Colonic mucosa (tissue), 4 donors: ENCODE measurements at regions of chr6 and their contacts with region 1.

Region 1: GRCh38 chr6:138115877-138116660 is 8.8 kb upstream of the PERP start:
- DNase-seq: peak; percentile 44
- H3K4me3 ChIP-seq: no peak overlapping the region
- H3K27ac ChIP-seq: no peak overlapping the region
- H3K4me1 ChIP-seq: no peaks in the 10 kb centered on the region
- H3K27me3 ChIP-seq: no peaks in the 10 kb centered on the region
- CTCF ChIP-seq: peak; percentile 59

Region 2: DNA sequence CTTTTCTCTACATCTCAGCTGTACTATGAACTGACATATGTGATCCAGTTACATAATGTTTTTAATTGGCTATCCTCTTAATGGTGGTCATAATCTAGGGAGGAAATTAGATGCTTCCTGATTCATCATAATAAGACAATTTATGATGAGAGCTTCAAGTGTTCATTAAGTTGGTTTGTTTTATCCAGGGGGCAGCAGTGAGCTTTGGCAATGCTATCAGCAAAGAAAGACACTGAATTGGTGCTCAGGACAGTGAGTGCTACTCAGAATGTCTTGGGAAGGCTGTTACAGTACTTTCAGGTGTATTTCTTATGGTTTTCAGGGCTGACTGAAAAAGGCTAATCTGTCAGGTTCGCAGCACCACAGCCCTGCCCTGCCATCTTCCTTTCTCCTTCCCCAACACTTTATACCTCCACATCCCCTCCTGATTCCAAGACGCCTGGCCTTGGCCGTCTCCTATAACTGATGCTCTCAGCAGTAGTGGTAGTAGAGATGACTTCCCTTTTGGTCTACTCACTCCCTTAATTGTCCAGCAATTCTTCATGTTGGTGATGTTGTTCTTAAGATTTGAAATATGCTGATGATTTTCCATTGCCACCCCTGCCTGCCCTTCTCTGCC is 316.0 kb before region 1 on chr6:
- intact Hi-C with region 1: no loop called
- DNase-seq: peak; percentile 71
- H3K4me3 ChIP-seq: no peak overlapping the region
- H3K27ac ChIP-seq: peak overlapping the region; percentile 62
- H3K4me1 ChIP-seq: no peaks in the 10 kb centered on the region
- H3K27me3 ChIP-seq: no peaks in the 10 kb centered on the region
- CTCF ChIP-seq: peak; percentile 44

Region 3: DNA sequence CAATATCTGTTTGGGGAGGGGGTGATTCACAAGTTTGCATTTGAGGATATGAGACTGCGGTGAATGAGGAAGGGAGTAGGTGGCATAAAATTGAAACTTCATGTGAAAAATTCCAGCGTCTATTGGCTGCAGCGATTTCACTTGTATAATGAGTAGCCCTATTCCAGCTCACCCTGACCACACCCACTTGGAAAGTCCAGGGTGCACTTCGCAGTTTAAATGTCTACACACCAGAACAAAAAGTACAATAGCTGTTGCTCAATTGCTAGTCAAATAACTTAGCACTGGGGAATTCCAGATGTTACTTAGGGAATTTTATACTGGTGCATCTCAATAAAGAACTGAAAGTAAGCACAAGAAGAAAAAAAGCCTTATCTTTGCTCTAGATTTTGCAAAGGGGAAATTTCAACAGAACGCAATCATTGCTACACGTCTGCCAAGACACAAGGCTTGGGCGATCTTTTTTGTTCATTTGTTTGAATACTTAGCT is 242.8 kb before region 1 on chr6:
- intact Hi-C with region 1: no loop called
- DNase-seq: peak; percentile 92
- H3K4me3 ChIP-seq: no peak overlapping the region
- H3K27ac ChIP-seq: peak overlapping the region; percentile 76
- H3K4me1 ChIP-seq: peaks cover 8% of the 10 kb centered on the region
- H3K27me3 ChIP-seq: no peaks in the 10 kb centered on the region
- CTCF ChIP-seq: no peak

Region 4: DNA sequence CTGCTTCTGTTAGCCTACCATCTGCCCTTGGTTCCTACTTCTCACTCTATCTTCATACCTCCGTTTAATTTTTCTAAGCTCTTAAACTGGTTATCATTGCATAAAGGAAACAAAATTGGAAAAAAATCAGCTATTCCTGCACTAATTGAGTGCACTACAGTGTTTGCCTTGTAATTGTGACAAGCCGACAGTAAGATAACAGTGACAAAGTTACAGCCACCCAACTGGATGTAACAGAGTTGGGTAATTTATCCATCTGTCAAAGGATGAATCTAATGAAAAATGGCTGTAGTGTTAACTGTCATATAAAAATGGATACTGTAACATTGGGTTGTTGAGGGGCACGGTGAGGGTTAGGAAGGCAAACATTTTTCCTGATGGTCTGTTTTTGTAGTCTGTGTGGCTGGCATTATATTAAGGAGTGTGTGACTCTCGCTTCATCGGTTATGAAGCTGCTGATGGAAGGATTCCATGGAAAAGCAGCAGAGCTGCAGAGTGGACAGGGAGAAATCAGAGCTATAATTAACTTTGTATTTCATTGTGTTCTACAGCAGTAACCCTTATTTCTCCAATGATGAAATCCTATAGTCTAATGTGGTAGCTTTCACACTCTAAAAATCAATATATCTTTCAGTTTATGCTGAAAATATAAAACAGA is 89.5 kb after region 1 on chr6:
- intact Hi-C with region 1: loop called (anchors 5 kb)
- DNase-seq: no peak
- H3K4me3 ChIP-seq: no peak overlapping the region
- H3K27ac ChIP-seq: no peak overlapping the region
- H3K4me1 ChIP-seq: no peaks in the 10 kb centered on the region
- H3K27me3 ChIP-seq: no peaks in the 10 kb centered on the region
- CTCF ChIP-seq: no peak

Region 5: GRCh38 chr6:138287144-138287955 is 171.3 kb after region 1 on chr6:
- intact Hi-C with region 1: loop called (anchors 2 kb)
- DNase-seq: peak; percentile 74
- H3K4me3 ChIP-seq: no peak overlapping the region
- H3K27ac ChIP-seq: no peak overlapping the region
- H3K4me1 ChIP-seq: no peaks in the 10 kb centered on the region
- H3K27me3 ChIP-seq: no peaks in the 10 kb centered on the region
- CTCF ChIP-seq: peak; percentile 68

Region 6: GRCh38 chr6:138404662-138405337 is 288.7 kb after region 1 on chr6:
- intact Hi-C with region 1: loop called (anchors 5 kb)
- DNase-seq: peak; percentile 53
- H3K4me3 ChIP-seq: peak overlapping the region; percentile 70
- H3K27ac ChIP-seq: peak overlapping the region; percentile 86
- H3K4me1 ChIP-seq: peaks cover 4% of the 10 kb centered on the region
- H3K27me3 ChIP-seq: no peaks in the 10 kb centered on the region
- CTCF ChIP-seq: no peak

Region 7: GRCh38 chr6:138517635-138518034 is 401.6 kb after region 1 on chr6:
- intact Hi-C with region 1: loop called (anchors 5 kb)
- DNase-seq: peak; percentile 73
- H3K4me3 ChIP-seq: no peak overlapping the region
- H3K27ac ChIP-seq: no peak overlapping the region
- H3K4me1 ChIP-seq: no peaks in the 10 kb centered on the region
- H3K27me3 ChIP-seq: no peaks in the 10 kb centered on the region
- CTCF ChIP-seq: peak; percentile 65

Region 8: DNA sequence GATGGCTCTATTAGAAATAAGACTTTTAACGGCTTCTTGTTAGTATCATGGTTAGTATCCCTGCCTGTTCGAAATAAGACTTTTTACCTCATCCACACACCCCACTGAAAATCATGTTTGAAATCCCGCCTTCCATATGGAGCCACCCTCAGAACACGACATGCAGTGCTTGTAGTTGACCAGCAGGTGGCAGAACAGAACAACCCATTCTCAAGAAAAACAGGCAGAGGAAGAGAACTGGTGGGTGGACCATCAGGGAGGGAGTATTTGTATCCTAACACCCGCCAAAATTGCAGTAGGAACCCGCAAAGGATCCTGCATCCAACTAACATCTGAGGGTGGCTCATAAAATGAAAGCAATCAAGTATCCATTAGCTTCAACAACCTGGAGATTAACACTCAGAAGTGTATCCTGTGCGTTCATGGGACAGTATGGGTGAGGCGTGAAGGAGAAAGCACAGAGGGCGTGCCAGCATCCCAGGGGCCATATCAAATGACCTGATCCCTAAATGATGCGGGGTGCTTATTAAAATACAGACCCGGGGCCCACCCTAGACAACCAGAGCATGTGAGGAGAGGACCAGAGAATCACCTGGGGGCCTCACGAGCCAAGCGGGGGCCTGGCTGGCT is 472.9 kb after region 1 on chr6:
- intact Hi-C with region 1: loop called (anchors 10 kb)
- DNase-seq: peak; percentile 70
- H3K4me3 ChIP-seq: no peak overlapping the region
- H3K27ac ChIP-seq: no peak overlapping the region
- H3K4me1 ChIP-seq: peaks cover 5% of the 10 kb centered on the region
- H3K27me3 ChIP-seq: no peaks in the 10 kb centered on the region
- CTCF ChIP-seq: peak; percentile 93

Region 9: DNA sequence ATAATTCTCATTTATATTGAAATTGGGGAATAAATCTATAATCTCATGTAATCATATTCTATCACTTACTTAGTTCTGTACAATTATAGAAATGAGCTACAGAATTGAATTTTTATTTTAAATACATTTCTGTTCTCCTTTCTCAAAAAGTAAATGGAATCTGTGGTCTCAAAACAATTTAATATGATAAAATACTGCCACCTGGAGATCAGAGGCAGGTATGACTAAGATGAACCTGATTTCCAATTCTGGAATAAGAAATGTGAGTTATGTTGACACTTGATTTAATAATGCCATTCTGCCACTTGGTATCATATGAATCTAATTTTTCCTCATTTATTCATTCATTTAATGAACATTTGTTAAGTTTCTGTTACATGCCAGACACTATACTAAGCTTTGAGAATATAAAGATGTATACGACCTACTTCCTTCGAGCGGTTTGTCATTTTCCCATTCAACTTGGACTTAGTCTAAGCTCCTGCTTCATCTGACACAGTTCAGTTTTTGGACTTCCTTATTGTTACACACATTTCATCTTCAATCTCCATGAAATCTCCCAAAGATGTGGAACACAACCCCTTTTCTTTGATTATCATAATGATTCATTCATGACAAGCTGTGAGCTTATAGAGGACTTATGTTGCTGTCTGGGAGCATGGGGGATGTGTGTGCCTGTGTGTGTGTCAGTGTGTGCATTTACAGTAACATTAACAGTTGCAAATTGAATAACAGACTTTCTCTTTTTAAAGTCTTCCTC is 650.0 kb after region 1 on chr6:
- intact Hi-C with region 1: loop called (anchors 10 kb)
- DNase-seq: no peak
- H3K4me3 ChIP-seq: no peak overlapping the region
- H3K27ac ChIP-seq: no peak overlapping the region
- H3K4me1 ChIP-seq: no peaks in the 10 kb centered on the region
- H3K27me3 ChIP-seq: no peaks in the 10 kb centered on the region
- CTCF ChIP-seq: peak; percentile 67